ENCODE measurements at regions of chr12 and their contacts with region 1.

Region 1: DNA sequence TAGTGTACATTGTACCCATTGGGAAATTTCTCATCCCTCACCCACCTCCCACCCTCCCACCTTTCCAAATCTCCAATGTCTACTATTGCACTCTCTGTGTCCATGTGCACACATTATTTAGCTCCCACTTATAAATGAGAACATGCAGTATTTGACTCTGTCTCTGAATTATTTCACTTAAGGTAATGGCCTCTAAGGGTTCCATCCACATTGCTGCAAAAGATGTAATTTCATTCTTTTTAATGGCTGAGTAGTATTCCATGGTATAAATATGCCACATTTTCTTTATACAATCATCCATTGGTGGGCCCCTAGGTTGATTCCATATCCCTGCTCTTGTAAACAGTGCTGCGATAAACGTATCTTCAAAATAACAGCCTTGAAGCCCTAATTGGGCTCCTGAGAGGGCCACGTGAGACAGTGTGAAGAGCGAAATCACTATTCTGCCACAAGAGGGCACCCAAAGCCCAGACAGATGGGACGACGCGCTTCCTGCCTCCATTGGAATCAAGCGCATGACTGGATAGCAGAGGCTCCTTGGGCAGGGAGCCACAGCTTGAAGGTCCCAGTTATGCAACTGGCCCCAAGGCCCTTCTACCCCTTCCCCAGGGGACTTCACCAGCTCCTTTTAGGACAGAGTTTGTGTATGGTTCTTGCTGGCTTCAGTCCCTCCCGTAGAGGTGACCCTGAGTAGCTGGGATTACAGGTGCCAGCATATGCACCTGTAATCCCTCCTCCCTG is 21.3 kb upstream of the CD27 start:
- DNase-seq: peak; percentile 82
- CTCF ChIP-seq: peak; percentile 86

Region 2: DNA sequence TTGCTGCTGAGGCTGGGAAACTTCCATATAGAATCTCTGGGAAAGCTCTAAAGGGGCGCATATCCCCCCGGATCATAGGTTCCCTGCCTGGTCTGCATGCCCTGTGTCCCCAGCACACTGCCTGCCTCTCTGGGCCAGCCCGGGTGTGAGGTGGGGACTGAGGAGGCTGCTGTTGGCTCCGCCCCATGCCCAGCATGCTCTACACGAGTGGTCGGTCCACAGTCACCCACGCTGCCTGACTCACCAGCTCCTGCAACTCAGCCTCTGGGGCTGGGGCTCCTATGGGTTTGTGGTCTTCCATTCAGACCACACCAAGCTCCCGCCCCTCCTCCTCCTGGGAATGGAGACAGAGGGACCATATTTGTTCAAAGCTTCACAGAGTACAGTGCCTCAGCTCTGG is 389.9 kb before region 1 on chr12:
- in situ Hi-C with region 1: no loop called
- DNase-seq: no peak
- CTCF ChIP-seq: no peak

Region 3: GRCh38 chr12:6520186-6520585 is 96.7 kb after region 1 on chr12:
- in situ Hi-C with region 1: no loop called
- DNase-seq: no peak
- CTCF ChIP-seq: no peak

Region 4: GRCh38 chr12:6540181-6540877 is 116.9 kb after region 1 on chr12:
- in situ Hi-C with region 1: loop called (anchors 10 kb)
- DNase-seq: peak; percentile 77
- CTCF ChIP-seq: no peak